ENCODE measurements at regions of chr2 and their contacts with region 1.

Region 1: DNA sequence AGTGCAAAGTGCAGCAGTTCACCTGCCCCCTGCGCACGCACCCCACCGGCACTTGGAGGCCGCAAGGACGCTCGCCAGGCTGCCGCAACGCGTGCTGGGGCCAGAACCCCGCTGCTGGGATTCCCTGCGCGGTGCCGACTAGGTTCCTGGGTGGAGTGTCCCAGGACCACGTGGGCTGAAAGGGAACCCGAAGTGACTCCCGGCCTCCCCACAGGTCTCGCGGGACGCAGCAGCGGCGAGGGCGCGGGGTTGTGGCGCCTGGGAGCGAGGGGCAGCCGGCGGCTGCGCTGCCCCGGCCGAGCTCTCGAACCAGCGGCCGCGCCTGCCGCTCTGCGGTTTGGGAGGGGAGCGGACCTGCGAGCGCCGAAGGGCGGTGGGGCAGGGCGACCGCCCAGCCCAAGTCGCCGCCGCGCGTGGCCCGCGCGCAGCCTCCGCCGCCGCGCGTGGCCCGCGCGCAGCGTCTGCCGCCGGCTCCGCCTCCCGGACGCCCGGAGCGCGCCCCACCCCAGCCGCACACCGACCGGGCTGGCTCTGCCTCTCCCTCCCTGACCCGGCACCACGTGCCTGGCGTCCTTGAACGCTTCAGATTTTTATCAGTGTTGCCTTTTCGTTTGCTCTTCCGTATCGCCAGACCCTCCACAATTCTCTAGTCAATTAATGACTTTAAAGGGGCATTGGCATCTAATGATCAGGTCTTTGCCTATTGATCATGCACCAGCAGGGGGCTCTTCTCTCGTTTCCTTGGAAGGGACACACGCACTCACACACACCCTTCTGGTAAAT is at the start of gene FTCDNL1:
- H3K4me3 Mint-ChIP-seq: peak within 1 kb of the TSS; percentile 84
- H3K27ac Mint-ChIP-seq: peak within 1 kb of the TSS; percentile 99
- H3K4me1 Mint-ChIP-seq: peaks cover 5% of the 10 kb centered on the region
- H3K27me3 Mint-ChIP-seq: no peaks in the 10 kb centered on the region

Region 2: DNA sequence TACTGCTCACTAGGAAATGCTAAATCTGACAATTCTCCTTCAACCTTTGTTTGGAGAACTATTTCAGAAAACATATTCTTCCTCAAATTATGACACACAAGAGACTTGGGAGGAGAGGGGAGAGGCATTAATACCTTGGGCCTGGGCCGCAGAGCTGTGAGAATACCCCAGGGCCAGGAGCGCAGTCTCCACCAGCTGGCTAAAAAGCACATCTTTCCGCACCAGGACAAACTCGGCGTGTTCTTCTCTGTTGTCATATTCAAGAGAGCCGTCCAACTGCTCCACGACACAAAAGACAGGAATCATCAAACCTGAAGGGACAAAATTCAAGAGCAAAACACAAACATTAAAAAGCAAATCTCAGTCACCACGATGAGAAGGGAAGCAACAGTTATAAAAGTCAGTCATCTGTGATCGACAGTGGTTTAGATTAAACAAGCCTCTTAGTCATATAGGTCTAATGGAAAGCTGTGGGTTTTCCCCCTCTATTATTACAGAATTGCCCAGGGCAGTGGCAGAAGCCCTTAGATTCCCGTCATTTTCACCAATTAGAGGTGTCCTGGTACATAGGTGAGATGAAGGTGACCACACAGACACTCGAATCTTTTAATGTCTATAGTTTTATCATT is 417.6 kb before region 1 on chr2:
- intact Hi-C with region 1: no loop called
- H3K4me3 Mint-ChIP-seq: no peak overlapping the region
- H3K27ac Mint-ChIP-seq: no peak overlapping the region
- H3K4me1 Mint-ChIP-seq: no peaks in the 10 kb centered on the region
- H3K27me3 Mint-ChIP-seq: no peaks in the 10 kb centered on the region

Region 3: DNA sequence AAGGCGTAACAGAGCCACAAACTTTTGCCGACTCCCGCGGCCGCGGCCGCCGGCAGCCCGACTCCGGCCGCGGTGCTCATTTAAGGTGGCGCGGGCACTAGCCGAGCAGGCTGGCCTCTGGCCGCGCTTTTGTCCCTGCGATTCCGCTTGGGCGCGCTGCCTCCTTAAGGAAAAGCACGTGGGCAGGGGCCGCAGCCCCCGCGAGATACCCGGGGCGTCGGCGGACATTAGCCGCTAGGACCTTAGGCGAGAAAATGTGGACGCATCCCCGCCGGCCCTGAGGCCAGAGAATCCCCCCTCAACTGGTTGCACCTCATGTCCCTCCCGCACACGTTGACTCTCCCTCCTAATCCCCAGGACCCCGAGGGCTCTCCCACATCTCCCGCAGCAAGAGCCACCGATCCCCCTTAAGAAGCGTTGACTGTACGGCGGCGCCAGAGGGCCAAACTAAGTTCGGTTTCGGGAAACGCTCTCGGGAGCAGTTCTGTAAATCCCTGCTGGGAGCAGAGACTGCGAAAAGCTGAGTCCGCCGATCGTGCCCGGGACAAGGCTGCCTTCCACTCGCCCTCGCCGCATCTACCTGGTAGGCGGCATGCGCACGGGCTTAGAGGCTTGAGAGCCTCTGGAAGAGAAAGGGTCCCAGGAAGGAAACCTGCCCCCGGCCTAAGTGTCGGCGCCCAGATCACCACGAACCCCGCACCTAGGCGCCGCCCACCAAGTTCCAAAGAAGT is 391.5 kb before region 1 on chr2:
- intact Hi-C with region 1: loop called (anchors 10 kb)
- H3K4me3 Mint-ChIP-seq: peak overlapping the region; percentile 92
- H3K27ac Mint-ChIP-seq: peak overlapping the region; percentile 91
- H3K4me1 Mint-ChIP-seq: peaks cover 64% of the 10 kb centered on the region
- H3K27me3 Mint-ChIP-seq: peaks cover 75% of the 10 kb centered on the region